Panc1 (cell line): ENCODE measurements at regions of chr6 and their contacts with region 1.

Region 1: GRCh38 chr6:34213772-34214171 is 22.9 kb upstream of the HMGA1 start:
- DNase-seq: no peak
- ATAC-seq: no peak
- H3K4me3 ChIP-seq: no peak overlapping the region
- H3K27ac ChIP-seq: no peak overlapping the region
- H3K4me1 ChIP-seq: no peaks in the 10 kb centered on the region
- H3K27me3 ChIP-seq: no peaks in the 10 kb centered on the region
- CTCF ChIP-seq: no peak

Region 2: DNA sequence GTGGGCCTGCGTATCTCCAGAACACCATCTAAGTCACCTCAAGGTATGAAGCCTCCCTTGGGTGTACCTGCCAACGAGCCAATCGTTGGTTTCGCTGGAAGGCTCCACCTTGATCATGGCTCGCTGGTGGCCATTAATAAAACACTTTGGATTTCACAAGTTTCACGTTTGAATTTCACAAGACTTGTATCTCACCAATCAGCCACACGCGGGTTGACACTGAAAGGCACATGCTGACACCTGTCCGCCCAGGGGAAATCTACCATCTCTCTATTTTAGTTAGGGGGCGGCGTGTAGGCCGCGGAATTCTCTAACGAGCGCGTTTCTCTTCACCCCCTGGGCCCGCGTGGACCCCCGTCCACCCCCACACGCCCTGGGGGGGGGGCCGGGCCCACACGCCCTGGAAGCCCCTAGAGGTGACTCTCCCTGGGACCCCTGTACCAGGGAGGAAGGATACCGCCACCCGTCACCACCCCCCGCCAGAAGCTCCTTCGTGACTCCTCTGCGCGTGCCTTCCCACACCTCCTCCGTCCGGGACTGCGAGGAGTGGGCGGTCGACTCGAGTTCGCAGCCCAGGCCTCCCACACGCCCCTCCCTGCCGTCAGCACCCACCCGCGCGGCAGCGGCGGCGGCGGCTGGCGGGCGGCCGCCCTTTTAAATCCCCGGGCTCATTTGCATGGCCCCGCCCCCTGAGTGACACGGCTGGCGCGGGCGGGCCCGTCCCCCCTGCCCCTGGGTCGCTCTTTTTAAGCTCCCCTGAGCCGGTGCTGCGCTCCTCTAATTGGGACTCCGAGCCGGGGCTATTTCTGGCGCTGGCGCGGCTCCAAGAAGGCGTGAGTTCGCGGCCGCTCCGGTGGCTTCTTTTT is 22.6 kb after region 1 on chr6 and contains the start of gene HMGA1:
- CTCF ChIA-PET with region 1: no interaction called
- POLR2A ChIA-PET with region 1: interaction called, 10 read pairs
- in situ Hi-C with region 1: no loop called
- intact Hi-C with region 1: no loop called
- DNase-seq: no peak
- ATAC-seq: peak; percentile 78
- H3K4me3 ChIP-seq: peak within 1 kb of the TSS; percentile 73 to 78
- H3K27ac ChIP-seq: peak within 1 kb of the TSS; percentile 90
- H3K4me1 ChIP-seq: peaks cover 38% of the 10 kb centered on the region
- H3K27me3 ChIP-seq: no peaks in the 10 kb centered on the region
- CTCF ChIP-seq: no peak
- total RNA-seq, gene HMGA1: 444 TPM

Region 3: DNA sequence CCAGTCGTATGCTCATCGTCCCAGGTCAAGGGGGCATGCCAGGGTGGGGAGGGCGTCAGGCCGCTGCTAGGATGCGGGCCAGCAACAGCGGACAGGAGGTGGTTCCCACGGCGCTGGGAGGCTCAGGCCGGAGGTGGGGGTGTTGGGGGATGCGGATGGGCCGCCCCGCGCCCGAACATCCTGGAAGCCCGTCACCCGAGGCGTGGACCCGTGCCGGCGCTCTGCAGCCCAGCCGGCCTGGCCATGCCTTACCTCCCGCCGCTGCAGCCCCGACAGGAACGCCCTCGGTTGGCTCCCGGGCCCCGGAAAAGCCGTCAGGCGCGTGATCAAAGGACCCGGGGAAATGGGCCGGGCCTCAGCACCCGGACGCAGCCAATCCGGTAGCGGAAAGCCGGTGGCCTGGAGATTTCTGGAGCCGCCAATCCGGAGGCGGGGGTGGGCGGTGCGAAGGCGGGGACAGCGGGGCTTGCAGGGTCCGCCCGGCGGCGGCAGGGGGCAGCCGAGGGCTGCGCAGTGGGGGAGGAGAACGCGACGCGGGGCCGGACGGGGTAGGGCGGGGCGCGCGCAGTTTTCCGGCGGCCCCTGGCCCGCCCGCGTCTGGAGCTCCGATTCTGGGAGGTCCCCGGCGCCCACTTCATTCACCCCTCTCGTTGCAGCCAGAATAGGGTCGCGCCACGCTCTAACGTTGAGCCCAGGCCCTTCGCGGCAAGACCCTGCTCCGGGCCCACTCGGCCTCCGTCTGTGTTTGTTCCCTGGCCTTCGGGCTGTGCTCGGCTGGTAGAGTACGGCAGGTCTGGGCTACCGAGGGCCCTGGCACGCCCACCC is 35.2 kb after region 1 on chr6 and contains the start of gene SMIM29:
- CTCF ChIA-PET with region 1: interaction called, 3 read pairs
- POLR2A ChIA-PET with region 1: interaction called, 19 read pairs
- in situ Hi-C with region 1: no loop called
- intact Hi-C with region 1: no loop called
- DNase-seq: no peak
- ATAC-seq: peak; percentile 73
- H3K4me3 ChIP-seq: peak within 1 kb of the TSS; percentile 51 to 91
- H3K27ac ChIP-seq: peak within 1 kb of the TSS; percentile 89
- H3K4me1 ChIP-seq: peaks cover 47% of the 10 kb centered on the region
- H3K27me3 ChIP-seq: no peaks in the 10 kb centered on the region
- CTCF ChIP-seq: peak; percentile 98
- total RNA-seq, gene SMIM29: 35.6 TPM